Psoas muscle (tissue), 8 donors: ENCODE measurements at regions of chr18 and their contacts with region 1.

Region 1: GRCh38 chr18:59988098-59988706 is 88.4 kb downstream of the PMAIP1 start:
- DNase-seq: peak; percentile 29 to 46
- ATAC-seq: no peak
- H3K4me3 ChIP-seq: no peak overlapping the region
- H3K27ac ChIP-seq: no peak overlapping the region
- H3K4me1 ChIP-seq: no peaks in the 10 kb centered on the region
- H3K27me3 ChIP-seq: no peaks in the 10 kb centered on the region
- CTCF ChIP-seq: peak; percentile 85

Region 2: GRCh38 chr18:60377778-60378469 is 389.7 kb after region 1 on chr18:
- intact Hi-C with region 1: no loop called
- DNase-seq: no peak
- ATAC-seq: no peak
- H3K4me3 ChIP-seq: no peak overlapping the region
- H3K27ac ChIP-seq: no peak overlapping the region
- H3K4me1 ChIP-seq: no peaks in the 10 kb centered on the region
- H3K27me3 ChIP-seq: no peaks in the 10 kb centered on the region
- CTCF ChIP-seq: no peak

Region 3: GRCh38 chr18:60554967-60555366 is 566.8 kb after region 1 on chr18:
- intact Hi-C with region 1: loop called in 1 of 2 experiments (anchors 5 kb)
- DNase-seq: no peak
- ATAC-seq: no peak
- H3K4me3 ChIP-seq: no peak overlapping the region
- H3K27ac ChIP-seq: no peak overlapping the region
- H3K4me1 ChIP-seq: no peaks in the 10 kb centered on the region
- H3K27me3 ChIP-seq: peaks cover 0 to 2% (median 0%) of the 10 kb centered on the region in 3 donors
- CTCF ChIP-seq: no peak